Natural killer cell (primary cell): ENCODE measurements at regions of chr17 and their contacts with region 1.

Region 1: GRCh38 chr17:35448214-35448898 is at the start of gene SLFN13:
- DNase-seq: peak; percentile 80 to 91
- ATAC-seq: peak; percentile 79 to 91 (median 86)
- H3K4me3 ChIP-seq: peak within 1 kb of the TSS; percentile 91
- H3K4me3 Mint-ChIP-seq: peak within 1 kb of the TSS; percentile 98
- H3K27ac ChIP-seq: peak within 1 kb of the TSS; percentile 97
- H3K27ac Mint-ChIP-seq: peak within 1 kb of the TSS; percentile 96 to 98
- H3K4me1 ChIP-seq: peaks cover 28% of the 10 kb centered on the region
- H3K4me1 Mint-ChIP-seq: peaks cover 44 to 46% of the 10 kb centered on the region in 2 donors
- H3K27me3 ChIP-seq: no peaks in the 10 kb centered on the region
- H3K27me3 Mint-ChIP-seq: no peaks in the 10 kb centered on the region
- CTCF ChIP-seq: no peak
- total RNA-seq, gene SLFN13: 85.9 to 182 (median 129) TPM

Region 2: GRCh38 chr17:35161281-35161761 is 287.0 kb before region 1 on chr17:
- intact Hi-C with region 1: loop called (anchors 5 kb)
- DNase-seq: peak; percentile 37 to 74
- ATAC-seq: peak; percentile 69 to 81 (median 77)
- H3K4me3 ChIP-seq: peak overlapping the region; percentile 14
- H3K4me3 Mint-ChIP-seq: peak overlapping the region; percentile 79
- H3K27ac ChIP-seq: peak overlapping the region; percentile 85
- H3K27ac Mint-ChIP-seq: peak overlapping the region; percentile 84 to 87
- H3K4me1 ChIP-seq: peaks cover 40% of the 10 kb centered on the region
- H3K4me1 Mint-ChIP-seq: peaks cover 37 to 43% of the 10 kb centered on the region in 2 donors
- H3K27me3 ChIP-seq: no peaks in the 10 kb centered on the region
- H3K27me3 Mint-ChIP-seq: no peaks in the 10 kb centered on the region
- CTCF ChIP-seq: no peak

Region 3: DNA sequence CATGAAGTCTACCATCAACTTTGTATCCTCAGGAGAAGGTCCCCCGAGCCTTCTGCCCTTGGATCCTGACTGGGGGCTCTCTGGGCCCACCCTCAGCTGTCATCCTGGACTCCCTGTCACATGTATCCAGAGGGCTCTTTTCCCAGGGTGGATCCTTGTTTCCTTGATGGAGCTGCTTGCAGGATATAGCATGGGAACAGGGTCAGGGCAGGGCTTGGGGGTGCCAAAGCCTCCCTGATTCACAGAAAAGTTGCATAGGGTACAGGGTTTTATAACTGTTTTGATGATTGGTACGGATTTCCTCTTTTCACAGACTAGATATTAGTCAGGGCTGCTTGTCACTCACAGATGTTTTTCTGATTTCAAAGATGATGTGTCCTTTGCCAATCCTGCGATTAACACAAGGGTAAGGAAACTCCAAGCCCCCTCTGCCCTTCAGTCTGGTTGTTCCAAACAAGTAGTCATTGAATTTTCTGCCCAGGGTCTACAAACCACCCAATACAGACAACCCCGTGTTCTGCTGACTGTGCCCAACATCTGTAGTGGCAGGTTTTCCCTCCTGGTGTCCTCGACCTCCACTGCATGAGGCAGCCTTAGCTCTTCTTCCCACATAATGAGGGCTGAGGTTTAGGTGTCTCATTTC is 233.6 kb before region 1 on chr17:
- intact Hi-C with region 1: no loop called
- DNase-seq: peak in 1 of 2 donors; percentile 62
- ATAC-seq: peak; percentile 36 to 56 (median 48)
- H3K4me3 ChIP-seq: no peak overlapping the region
- H3K4me3 Mint-ChIP-seq: peak overlapping the region; percentile 68
- H3K27ac ChIP-seq: peak overlapping the region; percentile 93
- H3K27ac Mint-ChIP-seq: peak overlapping the region; percentile 85 to 92
- H3K4me1 ChIP-seq: peaks cover 51% of the 10 kb centered on the region
- H3K4me1 Mint-ChIP-seq: peaks cover 69 to 79% of the 10 kb centered on the region in 2 donors
- H3K27me3 ChIP-seq: no peaks in the 10 kb centered on the region
- H3K27me3 Mint-ChIP-seq: no peaks in the 10 kb centered on the region
- CTCF ChIP-seq: no peak

Region 4: GRCh38 chr17:35373534-35373983 is 74.8 kb before region 1 on chr17 and contains the start of gene SLFN11:
- intact Hi-C with region 1: loop called (anchors 5 kb)
- DNase-seq: peak; percentile 62 to 93
- ATAC-seq: peak; percentile 78 to 86 (median 83)
- H3K4me3 ChIP-seq: peak within 1 kb of the TSS; percentile 67
- H3K4me3 Mint-ChIP-seq: peak within 1 kb of the TSS; percentile 98
- H3K27ac ChIP-seq: peak within 1 kb of the TSS; percentile 88
- H3K27ac Mint-ChIP-seq: peak within 1 kb of the TSS; percentile 95 to 97
- H3K4me1 ChIP-seq: peaks cover 10% of the 10 kb centered on the region
- H3K4me1 Mint-ChIP-seq: peaks cover 23 to 37% of the 10 kb centered on the region in 2 donors
- H3K27me3 ChIP-seq: no peaks in the 10 kb centered on the region
- H3K27me3 Mint-ChIP-seq: no peaks in the 10 kb centered on the region
- CTCF ChIP-seq: no peak
- total RNA-seq, gene SLFN11: 22.9 to 31.8 (median 26.8) TPM

Region 5: GRCh38 chr17:35416659-35417058 is 31.7 kb before region 1 on chr17:
- intact Hi-C with region 1: no loop called
- DNase-seq: no peak
- ATAC-seq: no peak
- H3K4me3 ChIP-seq: no peak overlapping the region
- H3K4me3 Mint-ChIP-seq: no peak overlapping the region
- H3K27ac ChIP-seq: no peak overlapping the region
- H3K27ac Mint-ChIP-seq: no peak overlapping the region
- H3K4me1 ChIP-seq: no peaks in the 10 kb centered on the region
- H3K4me1 Mint-ChIP-seq: peaks cover 13 to 14% of the 10 kb centered on the region in 2 donors
- H3K27me3 ChIP-seq: no peaks in the 10 kb centered on the region
- H3K27me3 Mint-ChIP-seq: no peaks in the 10 kb centered on the region
- CTCF ChIP-seq: no peak

Region 6: DNA sequence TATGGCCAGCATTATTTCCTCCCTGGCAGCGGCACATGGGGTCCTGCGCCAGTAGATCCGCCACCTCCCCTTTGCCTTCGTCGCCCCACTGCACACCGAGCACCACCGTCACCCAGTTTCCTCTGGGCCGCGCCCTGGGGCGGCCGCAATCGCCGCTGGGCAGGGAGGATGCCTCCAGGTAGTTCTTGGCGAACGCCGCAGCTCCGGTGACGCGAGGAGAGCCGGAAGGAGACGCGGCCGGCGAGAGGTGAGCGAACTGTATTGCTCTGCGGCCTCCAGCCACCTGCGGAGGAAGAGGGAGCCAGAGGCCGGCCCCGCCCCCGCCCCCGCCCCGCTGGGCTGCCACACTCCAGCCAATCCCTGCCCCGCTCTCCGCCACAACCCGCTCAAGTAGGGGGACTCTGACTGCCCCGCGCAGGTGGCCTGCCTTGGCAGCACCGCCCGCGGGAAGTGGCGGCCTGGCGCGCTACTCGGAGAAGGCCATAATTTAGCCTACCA is 12.0 kb after region 1 on chr17:
- intact Hi-C with region 1: no loop called
- DNase-seq: peak; percentile 56 to 81
- ATAC-seq: peak; percentile 86 to 88 (median 87)
- H3K4me3 ChIP-seq: peak overlapping the region; percentile 22
- H3K4me3 Mint-ChIP-seq: peak overlapping the region; percentile 89
- H3K27ac ChIP-seq: peak overlapping the region; percentile 72
- H3K27ac Mint-ChIP-seq: peak overlapping the region; percentile 83 to 93
- H3K4me1 ChIP-seq: peaks cover 9% of the 10 kb centered on the region
- H3K4me1 Mint-ChIP-seq: peaks cover 27 to 35% of the 10 kb centered on the region in 2 donors
- H3K27me3 ChIP-seq: no peaks in the 10 kb centered on the region
- H3K27me3 Mint-ChIP-seq: no peaks in the 10 kb centered on the region
- CTCF ChIP-seq: no peak

Region 7: DNA sequence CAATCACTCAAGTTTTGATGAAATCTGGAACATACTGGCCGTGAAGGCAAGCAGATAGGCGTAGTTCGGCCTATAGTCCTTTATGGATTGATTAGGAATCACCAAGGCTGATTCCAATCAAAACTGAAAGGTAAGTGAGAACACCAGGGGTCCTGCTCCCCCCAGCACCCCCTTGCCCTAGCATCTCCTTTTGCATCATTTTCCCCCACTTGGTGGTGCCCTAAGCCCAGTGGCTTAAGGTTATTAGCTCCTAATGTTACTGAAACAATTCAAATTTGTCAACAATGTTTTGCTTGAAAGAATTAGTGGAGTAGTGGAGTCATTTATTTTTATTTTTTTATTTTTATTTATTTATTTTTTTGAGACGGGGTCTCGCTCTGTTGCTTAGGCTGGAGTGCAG is 107.3 kb after region 1 on chr17:
- intact Hi-C with region 1: no loop called
- DNase-seq: peak in 1 of 2 donors; percentile 37
- ATAC-seq: no peak
- H3K4me3 ChIP-seq: no peak overlapping the region
- H3K4me3 Mint-ChIP-seq: no peak overlapping the region
- H3K27ac ChIP-seq: no peak overlapping the region
- H3K27ac Mint-ChIP-seq: no peak overlapping the region
- H3K4me1 ChIP-seq: no peaks in the 10 kb centered on the region
- H3K4me1 Mint-ChIP-seq: no peaks in the 10 kb centered on the region
- H3K27me3 ChIP-seq: peaks cover 2% of the 10 kb centered on the region
- H3K27me3 Mint-ChIP-seq: peaks cover 12 to 18% of the 10 kb centered on the region in 2 donors
- CTCF ChIP-seq: no peak